Activated B cell treated with CpG ODN at 0.5 μM for 24 hours (primary cell): ENCODE measurements at regions of chr14 and their contacts with region 1.

Region 1: DNA sequence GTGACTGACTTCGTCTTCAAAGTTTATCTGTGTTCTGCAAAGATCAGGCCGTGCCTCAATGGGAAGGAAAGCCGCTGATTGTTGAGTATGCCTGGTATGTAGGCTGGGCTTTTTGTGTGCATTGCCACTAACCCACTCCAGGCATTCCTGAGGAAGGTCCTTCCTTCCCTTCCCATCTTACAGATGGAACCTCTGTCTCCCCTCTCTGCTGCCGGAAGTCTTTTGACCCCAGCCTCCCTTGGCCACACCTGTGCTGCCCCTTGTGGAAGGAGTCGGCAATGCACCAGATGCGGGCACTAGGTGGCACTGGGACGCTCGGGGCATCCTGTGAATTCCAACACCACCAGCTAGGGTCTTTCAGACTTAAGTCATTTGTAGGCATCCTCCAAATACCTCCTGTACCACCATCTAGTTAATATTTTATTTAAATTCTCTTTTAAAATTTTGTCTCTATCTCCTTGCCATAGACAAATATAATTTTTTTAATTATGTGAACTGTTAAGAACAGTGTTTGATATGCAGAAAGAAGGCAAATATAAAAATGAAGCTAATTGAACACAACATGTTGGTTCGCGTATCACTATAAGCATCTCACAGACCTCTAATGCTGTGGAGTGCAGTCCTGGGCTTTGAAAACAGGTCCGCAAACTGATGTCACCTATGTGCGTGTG is 99.5 kb downstream of the RIN3 start:
- DNase-seq: peak; percentile 58
- ATAC-seq: peak; percentile 8
- H3K4me3 Mint-ChIP-seq: peak overlapping the region; percentile 46
- H3K27ac Mint-ChIP-seq: peak overlapping the region; percentile 75
- H3K4me1 Mint-ChIP-seq: peaks cover 74% of the 10 kb centered on the region
- H3K27me3 Mint-ChIP-seq: no peaks in the 10 kb centered on the region
- CTCF ChIP-seq: no peak

Region 2: GRCh38 chr14:92456215-92457015 is 156.7 kb before region 1 on chr14:
- CTCF ChIA-PET with region 1: no interaction called
- POLR2A ChIA-PET with region 1: no interaction called
- intact Hi-C with region 1: no loop called
- DNase-seq: no peak
- ATAC-seq: peak; percentile 77
- H3K4me3 Mint-ChIP-seq: no peak overlapping the region
- H3K27ac Mint-ChIP-seq: no peak overlapping the region
- H3K4me1 Mint-ChIP-seq: peaks cover 6% of the 10 kb centered on the region
- H3K27me3 Mint-ChIP-seq: peaks cover 5% of the 10 kb centered on the region
- CTCF ChIP-seq: no peak

Region 3: GRCh38 chr14:92568621-92569479 is 44.3 kb before region 1 on chr14:
- CTCF ChIA-PET with region 1: no interaction called
- POLR2A ChIA-PET with region 1: interaction called, 3 read pairs
- intact Hi-C with region 1: loop called (anchors 1 kb)
- DNase-seq: peak; percentile 34
- ATAC-seq: peak; percentile 84
- H3K4me3 Mint-ChIP-seq: peak overlapping the region; percentile 67
- H3K27ac Mint-ChIP-seq: peak overlapping the region; percentile 95
- H3K4me1 Mint-ChIP-seq: peaks cover 36% of the 10 kb centered on the region
- H3K27me3 Mint-ChIP-seq: no peaks in the 10 kb centered on the region
- CTCF ChIP-seq: no peak

Region 4: GRCh38 chr14:92633274-92633616 is 20.1 kb after region 1 on chr14:
- CTCF ChIA-PET with region 1: interaction called, 28 read pairs
- POLR2A ChIA-PET with region 1: interaction called, 18 read pairs
- intact Hi-C with region 1: loop called (anchors 1 kb)
- DNase-seq: peak; percentile 27
- ATAC-seq: peak; percentile 81
- H3K4me3 Mint-ChIP-seq: peak overlapping the region; percentile 70
- H3K27ac Mint-ChIP-seq: peak overlapping the region; percentile 54
- H3K4me1 Mint-ChIP-seq: peaks cover 42% of the 10 kb centered on the region
- H3K27me3 Mint-ChIP-seq: no peaks in the 10 kb centered on the region
- CTCF ChIP-seq: no peak

Region 5: DNA sequence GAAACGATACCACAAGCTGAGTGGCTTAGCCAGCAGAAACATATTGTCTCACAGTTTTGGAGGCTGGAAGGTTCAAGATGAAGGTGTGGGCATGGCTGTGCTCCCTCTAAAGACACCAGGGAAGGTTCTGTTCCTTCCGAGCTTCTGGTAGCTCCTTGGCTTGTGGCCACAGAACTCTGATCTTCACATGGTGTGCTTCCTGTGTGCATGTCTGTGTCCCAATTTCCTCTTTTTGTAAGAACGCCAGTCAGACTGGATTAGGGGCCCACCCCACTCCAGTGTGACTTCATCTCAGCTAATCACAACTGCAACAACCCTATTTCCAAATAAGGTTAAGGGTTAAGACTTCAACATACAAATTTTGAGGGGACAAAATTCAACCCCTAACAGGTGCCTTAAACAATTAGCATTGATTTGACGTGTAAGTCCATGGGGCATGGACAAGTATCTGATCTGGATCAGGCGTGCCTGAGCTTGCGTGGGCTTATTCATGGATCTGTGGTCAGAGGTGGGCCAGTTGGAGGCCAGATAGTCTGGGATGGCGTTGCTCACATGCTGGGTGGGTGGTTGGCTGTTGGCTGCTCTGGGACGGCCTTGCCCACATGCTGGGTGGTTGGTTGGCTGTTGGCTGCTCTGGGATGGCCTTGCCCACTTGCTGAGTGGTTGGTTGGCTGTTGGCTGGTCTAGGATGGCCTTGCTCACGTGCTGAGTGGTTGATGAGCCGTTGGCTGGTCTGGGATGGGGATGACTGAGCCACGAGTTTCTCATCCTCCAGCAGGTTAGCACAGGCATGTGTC is 46.8 kb after region 1 on chr14:
- CTCF ChIA-PET with region 1: interaction called, 7 read pairs
- POLR2A ChIA-PET with region 1: interaction called, 135 read pairs
- intact Hi-C with region 1: loop called (anchors 1 kb)
- DNase-seq: no peak
- ATAC-seq: peak; percentile 67
- H3K4me3 Mint-ChIP-seq: peak overlapping the region; percentile 36
- H3K27ac Mint-ChIP-seq: peak overlapping the region; percentile 74
- H3K4me1 Mint-ChIP-seq: peaks cover 97% of the 10 kb centered on the region
- H3K27me3 Mint-ChIP-seq: no peaks in the 10 kb centered on the region
- CTCF ChIP-seq: no peak

Region 6: DNA sequence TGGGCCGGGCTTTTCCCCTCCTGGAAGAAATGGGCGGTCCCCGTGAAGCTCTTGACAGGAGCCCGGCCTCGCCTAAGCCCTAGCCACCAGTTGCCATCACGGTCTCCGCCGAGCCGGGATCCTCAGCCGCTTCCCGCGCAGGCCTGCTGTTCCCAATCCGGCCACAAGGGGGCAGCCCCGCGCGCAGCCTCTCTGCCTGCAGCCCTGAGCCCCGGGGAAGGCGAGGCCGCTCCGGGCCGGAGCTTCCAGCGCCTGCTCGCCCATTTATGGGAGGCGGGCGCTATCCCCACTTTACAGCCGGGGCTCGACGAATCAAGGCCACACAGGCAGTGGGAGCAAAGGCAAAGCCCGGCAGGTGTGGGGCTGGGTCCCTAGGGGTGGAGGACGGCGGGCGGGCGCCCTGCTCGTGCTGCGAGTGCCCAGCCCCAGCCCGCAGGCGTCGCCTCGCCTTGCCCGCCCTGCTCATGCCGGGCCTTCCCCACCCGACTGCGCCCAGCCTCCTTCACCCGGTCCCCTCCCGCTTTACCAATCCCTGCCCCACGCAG is 73.8 kb after region 1 on chr14:
- CTCF ChIA-PET with region 1: interaction called, 71 read pairs
- POLR2A ChIA-PET with region 1: interaction called, 16 read pairs
- intact Hi-C with region 1: no loop called
- DNase-seq: peak; percentile 83
- ATAC-seq: peak; percentile 90
- H3K4me3 Mint-ChIP-seq: no peak overlapping the region
- H3K27ac Mint-ChIP-seq: no peak overlapping the region
- H3K4me1 Mint-ChIP-seq: no peaks in the 10 kb centered on the region
- H3K27me3 Mint-ChIP-seq: no peaks in the 10 kb centered on the region
- CTCF ChIP-seq: peak; percentile 89